Heart left ventricle (tissue), 16 donors: ENCODE measurements at regions of chr2 and their contacts with region 1.

Region 1: GRCh38 chr2:228377533-228377932 is 196.0 kb upstream of the SPHKAP start:
- DNase-seq: no peak
- ATAC-seq: peak in 3 of 4 donors; percentile 39 to 47 (median 43)
- H3K4me3 ChIP-seq: no peak overlapping the region
- H3K27ac ChIP-seq: peak overlapping the region in 10 of 12 donors; percentile 27 to 88 (median 76)
- H3K4me1 ChIP-seq: peaks cover 0 to 22% (median 7%) of the 10 kb centered on the region in 12 donors
- H3K27me3 ChIP-seq: no peaks in the 10 kb centered on the region
- CTCF ChIP-seq: no peak
- POLR2A ChIP-seq: no peak

Region 2: GRCh38 chr2:228048838-228049490 is 328.6 kb before region 1 on chr2:
- intact Hi-C with region 1: loop called in 2 of 10 experiments (anchors 5 to 10 kb)
- DNase-seq: peak in 2 of 5 donors; percentile 9 to 30
- ATAC-seq: peak; percentile 87 to 96 (median 90)
- H3K4me3 ChIP-seq: no peak overlapping the region
- H3K27ac ChIP-seq: peak overlapping the region in 1 of 12 donors; percentile 14
- H3K4me1 ChIP-seq: peaks cover 0 to 11% (median 0%) of the 10 kb centered on the region in 12 donors
- H3K27me3 ChIP-seq: no peaks in the 10 kb centered on the region
- CTCF ChIP-seq: peak; percentile 19 to 64 (median 48)
- POLR2A ChIP-seq: no peak

Region 3: GRCh38 chr2:228056293-228057097 is 321.0 kb before region 1 on chr2:
- intact Hi-C with region 1: loop called in 1 of 10 experiments (anchors 10 kb)
- DNase-seq: no peak
- ATAC-seq: no peak
- H3K4me3 ChIP-seq: no peak overlapping the region
- H3K27ac ChIP-seq: no peak overlapping the region
- H3K4me1 ChIP-seq: peaks cover 0 to 32% (median 0%) of the 10 kb centered on the region in 12 donors
- H3K27me3 ChIP-seq: no peaks in the 10 kb centered on the region
- CTCF ChIP-seq: no peak
- POLR2A ChIP-seq: no peak

Region 4: GRCh38 chr2:228239207-228239906 is 138.2 kb before region 1 on chr2:
- intact Hi-C with region 1: no loop called
- DNase-seq: no peak
- ATAC-seq: no peak
- H3K4me3 ChIP-seq: no peak overlapping the region
- H3K27ac ChIP-seq: no peak overlapping the region
- H3K4me1 ChIP-seq: no peaks in the 10 kb centered on the region
- H3K27me3 ChIP-seq: no peaks in the 10 kb centered on the region
- CTCF ChIP-seq: no peak
- POLR2A ChIP-seq: no peak

Region 5: GRCh38 chr2:228329282-228329681 is 48.3 kb before region 1 on chr2:
- intact Hi-C with region 1: loop called in 1 of 10 experiments (anchors 5 kb)
- DNase-seq: peak in 4 of 5 donors; percentile 36 to 57 (median 52)
- ATAC-seq: peak; percentile 91 to 96 (median 94)
- H3K4me3 ChIP-seq: no peak overlapping the region
- H3K27ac ChIP-seq: peak overlapping the region in 9 of 12 donors; percentile 0 to 72 (median 62)
- H3K4me1 ChIP-seq: peaks cover 0 to 11% (median 0%) of the 10 kb centered on the region in 12 donors
- H3K27me3 ChIP-seq: no peaks in the 10 kb centered on the region
- CTCF ChIP-seq: no peak
- POLR2A ChIP-seq: no peak

Region 6: DNA sequence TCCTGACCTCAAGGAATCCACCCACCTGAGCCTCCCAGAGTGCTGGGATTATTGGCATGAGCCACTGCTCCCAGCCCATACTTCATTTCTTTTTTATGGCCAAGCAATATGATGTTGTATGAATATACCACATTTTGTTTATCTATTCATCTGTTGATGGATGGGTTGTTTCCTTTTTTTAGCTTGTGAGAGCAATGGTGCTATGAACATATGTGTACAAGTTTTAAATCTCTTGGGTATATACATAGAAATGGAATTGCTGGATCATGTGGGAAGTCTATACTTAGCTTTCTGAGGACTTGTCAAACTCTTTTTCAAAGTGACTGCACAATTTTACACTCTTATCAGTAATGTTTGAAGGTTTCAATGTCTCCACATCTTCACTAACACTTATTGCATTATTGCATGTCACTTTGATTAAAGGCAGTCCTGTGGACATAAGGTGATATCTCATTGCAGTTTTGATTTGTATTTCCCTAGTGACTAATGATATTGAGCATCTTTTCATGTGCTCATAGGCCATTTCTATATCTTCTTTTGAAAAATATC is 28.9 kb before region 1 on chr2:
- intact Hi-C with region 1: loop called in 2 of 10 experiments (anchors 1 kb)
- DNase-seq: no peak
- ATAC-seq: peak; percentile 92 to 98 (median 96)
- H3K4me3 ChIP-seq: no peak overlapping the region
- H3K27ac ChIP-seq: peak overlapping the region in 9 of 12 donors; percentile 37 to 85 (median 64)
- H3K4me1 ChIP-seq: peaks cover 0 to 6% (median 0%) of the 10 kb centered on the region in 12 donors
- H3K27me3 ChIP-seq: no peaks in the 10 kb centered on the region
- CTCF ChIP-seq: no peak
- POLR2A ChIP-seq: no peak

Region 7: GRCh38 chr2:228646061-228646460 is 268.5 kb after region 1 on chr2:
- intact Hi-C with region 1: loop called in 3 of 10 experiments (anchors 2 to 5 kb)
- DNase-seq: no peak
- ATAC-seq: no peak
- H3K4me3 ChIP-seq: no peak overlapping the region
- H3K27ac ChIP-seq: no peak overlapping the region
- H3K4me1 ChIP-seq: peaks cover 0 to 15% (median 0%) of the 10 kb centered on the region in 12 donors
- H3K27me3 ChIP-seq: no peaks in the 10 kb centered on the region
- CTCF ChIP-seq: no peak
- POLR2A ChIP-seq: no peak

Region 8: DNA sequence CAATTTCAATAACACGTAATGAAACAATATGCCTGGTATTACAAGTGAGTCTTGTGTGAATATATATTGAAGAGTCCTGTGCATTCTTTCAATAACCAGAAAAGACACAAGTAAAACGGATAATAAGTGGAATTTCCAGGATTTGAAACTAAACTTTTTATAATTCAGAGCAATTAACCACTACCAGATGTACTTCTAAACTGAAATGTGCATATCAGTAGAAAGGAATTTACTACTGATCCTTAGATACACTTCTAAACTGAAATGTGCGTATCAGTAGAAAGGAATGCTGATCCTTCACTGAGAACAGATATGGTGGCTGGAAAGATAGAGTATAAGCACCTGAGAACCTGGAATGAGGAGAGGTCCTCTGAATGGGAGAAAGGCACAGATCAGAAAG is 274.8 kb after region 1 on chr2:
- intact Hi-C with region 1: loop called in 2 of 10 experiments (anchors 5 kb)
- DNase-seq: no peak
- ATAC-seq: no peak
- H3K4me3 ChIP-seq: no peak overlapping the region
- H3K27ac ChIP-seq: no peak overlapping the region
- H3K4me1 ChIP-seq: peaks cover 0 to 14% (median 0%) of the 10 kb centered on the region in 12 donors
- H3K27me3 ChIP-seq: no peaks in the 10 kb centered on the region
- CTCF ChIP-seq: no peak
- POLR2A ChIP-seq: no peak